Activated T-helper 1 cell treated with anti-CD3 and anti-CD28 coated beads, Interleukin-12 subunit alpha, Interleukin-12 subunit beta, Interleukin-2, Interleukin-4 antibody, amounts not matched to agents 30 ng/mL and 10 ng/mL and 1 ng/mL, durations not matched to agents 14 hours and 24 hours and 36 hours (primary cell): ENCODE measurements at regions of chr11 and their contacts with region 1.

Region 1: GRCh38 chr11:46889689-46890475 is 28.5 kb downstream of the LRP4 start:
- DNase-seq: peak; percentile 57
- H3K4me3 Mint-ChIP-seq: no peak overlapping the region
- H3K27ac Mint-ChIP-seq: no peak overlapping the region
- H3K4me1 Mint-ChIP-seq: no peaks in the 10 kb centered on the region
- H3K27me3 Mint-ChIP-seq: peaks cover 1% of the 10 kb centered on the region

Region 2: GRCh38 chr11:46835897-46836296 is 54.0 kb before region 1 on chr11:
- intact Hi-C with region 1: loop called (anchors 2 kb)
- DNase-seq: no peak
- H3K4me3 Mint-ChIP-seq: no peak overlapping the region
- H3K27ac Mint-ChIP-seq: no peak overlapping the region
- H3K4me1 Mint-ChIP-seq: peaks cover 47% of the 10 kb centered on the region
- H3K27me3 Mint-ChIP-seq: no peaks in the 10 kb centered on the region

Region 3: DNA sequence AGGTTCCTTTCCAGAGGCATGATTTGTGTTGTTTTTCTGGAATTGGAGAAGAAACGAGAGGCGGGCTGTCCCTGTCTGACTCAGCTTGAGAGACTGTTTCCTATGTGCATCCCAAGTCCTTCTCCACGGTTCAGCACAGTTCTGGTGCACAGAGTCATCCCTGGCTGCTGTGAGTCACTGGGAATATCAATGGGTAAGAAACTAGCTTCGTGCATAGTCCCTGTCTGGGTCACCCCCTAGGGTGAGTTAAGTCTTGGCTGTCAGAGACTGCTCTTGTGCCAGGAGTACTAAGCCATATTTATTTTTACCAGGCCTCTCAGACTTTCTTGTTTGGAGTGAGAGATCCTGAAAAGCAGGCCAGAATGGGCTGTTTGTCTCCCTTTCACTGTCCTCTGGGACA is 30.9 kb after region 1 on chr11:
- intact Hi-C with region 1: loop called (anchors 1 kb)
- DNase-seq: no peak
- H3K4me3 Mint-ChIP-seq: no peak overlapping the region
- H3K27ac Mint-ChIP-seq: no peak overlapping the region
- H3K4me1 Mint-ChIP-seq: peaks cover 24% of the 10 kb centered on the region
- H3K27me3 Mint-ChIP-seq: peaks cover 43% of the 10 kb centered on the region

Region 4: GRCh38 chr11:47152953-47153950 is 263.4 kb after region 1 on chr11:
- intact Hi-C with region 1: loop called (anchors 1 kb)
- DNase-seq: peak; percentile 32
- H3K4me3 Mint-ChIP-seq: no peak overlapping the region
- H3K27ac Mint-ChIP-seq: no peak overlapping the region
- H3K4me1 Mint-ChIP-seq: peaks cover 24% of the 10 kb centered on the region
- H3K27me3 Mint-ChIP-seq: peaks cover 3% of the 10 kb centered on the region

Region 5: DNA sequence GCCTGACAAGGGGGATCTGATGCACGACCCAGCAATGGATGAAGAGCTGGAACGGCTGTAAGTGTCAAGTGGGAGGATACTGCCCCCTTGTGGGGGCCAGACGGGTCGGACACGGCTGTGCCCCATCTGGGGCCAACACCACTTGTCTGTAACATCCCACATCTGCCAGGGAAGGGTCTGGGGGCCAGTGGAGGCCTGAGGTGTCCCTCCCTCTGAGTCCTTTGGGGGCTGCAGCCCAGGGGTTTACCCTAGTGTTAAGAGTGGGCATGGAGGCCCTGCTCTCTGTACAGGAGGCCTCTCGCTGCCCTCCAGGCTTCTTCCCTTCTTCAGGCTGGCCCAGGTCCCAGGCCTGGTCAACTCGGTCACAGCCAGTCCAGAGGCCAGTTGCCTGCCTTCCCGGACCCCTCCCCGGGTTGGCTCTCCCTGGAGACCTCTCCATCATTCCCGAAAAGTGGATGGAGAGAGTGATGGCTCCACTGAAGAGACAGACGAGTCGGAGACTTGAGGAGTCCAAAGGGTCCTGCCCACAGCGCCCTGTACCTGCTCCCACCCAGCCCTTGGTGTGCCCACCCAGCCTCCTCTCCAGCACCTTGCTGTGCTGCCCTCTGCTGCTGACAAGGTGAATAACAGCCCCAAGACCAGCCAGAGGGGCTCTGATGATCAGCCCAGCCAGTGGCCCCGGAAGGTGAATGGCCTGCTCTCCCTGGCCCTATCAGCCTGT is 271.4 kb after region 1 on chr11:
- intact Hi-C with region 1: loop called (anchors 1 kb)
- DNase-seq: peak; percentile 25
- H3K4me3 Mint-ChIP-seq: no peak overlapping the region
- H3K27ac Mint-ChIP-seq: no peak overlapping the region
- H3K4me1 Mint-ChIP-seq: no peaks in the 10 kb centered on the region
- H3K27me3 Mint-ChIP-seq: no peaks in the 10 kb centered on the region

Region 6: GRCh38 chr11:47259178-47259977 is 369.5 kb after region 1 on chr11:
- intact Hi-C with region 1: loop called (anchors 2 kb)
- DNase-seq: no peak
- H3K4me3 Mint-ChIP-seq: no peak overlapping the region
- H3K27ac Mint-ChIP-seq: no peak overlapping the region
- H3K4me1 Mint-ChIP-seq: peaks cover 20% of the 10 kb centered on the region
- H3K27me3 Mint-ChIP-seq: no peaks in the 10 kb centered on the region

Region 7: DNA sequence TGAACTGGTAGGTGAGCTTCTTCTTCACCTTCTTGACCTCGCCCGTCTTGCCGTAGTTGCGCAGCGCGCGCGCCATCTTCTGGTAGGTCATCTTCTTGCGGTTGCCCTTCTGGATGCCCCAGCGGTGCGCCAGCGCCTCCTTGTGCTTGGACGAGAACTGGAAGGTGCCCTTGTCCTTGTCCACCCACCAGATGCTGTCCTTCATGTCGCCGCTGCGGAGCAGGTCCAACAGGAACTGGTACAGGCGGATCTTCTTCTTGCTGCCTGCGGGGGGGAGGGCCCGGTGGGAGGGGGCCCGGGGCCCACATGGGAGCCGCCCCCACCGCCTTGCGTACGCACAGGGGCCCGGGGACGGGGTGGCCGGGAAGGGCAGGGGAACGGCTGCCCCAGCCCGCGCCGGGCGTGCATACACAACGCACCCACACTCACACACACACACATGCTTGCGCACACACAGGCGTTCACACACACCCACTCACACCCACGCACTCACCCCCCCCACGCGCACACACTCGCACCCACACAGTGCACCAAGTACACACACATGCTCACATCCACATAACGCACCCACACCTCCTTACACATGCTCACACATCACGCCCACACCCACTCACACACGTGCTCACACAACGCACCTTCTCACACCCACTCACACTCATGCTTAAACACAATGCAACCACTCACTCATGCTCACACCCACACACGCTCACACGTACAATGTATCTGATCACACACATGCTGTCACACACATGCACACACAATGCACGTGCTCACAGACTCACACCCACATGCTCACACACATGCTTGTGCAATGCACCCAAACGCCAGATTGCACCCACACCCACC is 465.6 kb after region 1 on chr11:
- intact Hi-C with region 1: no loop called
- DNase-seq: no peak
- H3K4me3 Mint-ChIP-seq: no peak overlapping the region
- H3K27ac Mint-ChIP-seq: no peak overlapping the region
- H3K4me1 Mint-ChIP-seq: peaks cover 6% of the 10 kb centered on the region
- H3K27me3 Mint-ChIP-seq: no peaks in the 10 kb centered on the region

Region 8: GRCh38 chr11:47454180-47454644 is 564.3 kb after region 1 on chr11:
- intact Hi-C with region 1: loop called (anchors 1 kb)
- DNase-seq: peak; percentile 57
- H3K4me3 Mint-ChIP-seq: no peak overlapping the region
- H3K27ac Mint-ChIP-seq: no peak overlapping the region
- H3K4me1 Mint-ChIP-seq: peaks cover 4% of the 10 kb centered on the region
- H3K27me3 Mint-ChIP-seq: no peaks in the 10 kb centered on the region